Left colon (tissue), 2 donors: ENCODE measurements at regions of chr10 and their contacts with region 1.

Region 1: GRCh38 chr10:14959276-14960057 is at the start of gene MEIG1:
- DNase-seq: peak; percentile 95 to 96
- ATAC-seq: peak; percentile 95
- total RNA-seq, gene MEIG1: not detected

Region 2: DNA sequence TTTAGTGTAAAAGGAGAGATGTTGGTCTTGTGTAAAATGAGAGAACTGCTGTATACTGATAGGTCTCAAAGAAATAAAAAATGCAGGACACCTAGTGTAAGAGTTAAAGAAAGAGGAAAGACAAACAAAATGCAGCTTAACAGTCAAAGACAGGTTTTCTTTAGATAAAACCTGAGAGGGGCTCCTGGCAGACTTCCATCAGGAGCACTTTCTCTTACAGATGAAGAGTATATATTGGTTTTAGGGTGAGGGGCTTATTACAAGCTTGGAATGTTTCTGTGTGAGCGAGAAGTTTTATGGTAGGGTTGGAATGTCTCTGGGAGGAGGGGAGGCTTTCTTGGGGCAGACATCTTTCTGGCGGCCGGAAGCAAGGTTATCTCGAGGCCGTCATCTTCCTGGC is 112.9 kb after region 1 on chr10:
- intact Hi-C with region 1: no loop called
- DNase-seq: no peak
- ATAC-seq: no peak

Region 3: GRCh38 chr10:15106352-15107013 is 147.0 kb after region 1 on chr10:
- intact Hi-C with region 1: loop called in 1 of 2 experiments (anchors 10 kb)
- DNase-seq: peak; percentile 60 to 82
- ATAC-seq: peak; percentile 88